ENCODE measurements at regions of chr3 and their contacts with region 1.

Region 1: DNA sequence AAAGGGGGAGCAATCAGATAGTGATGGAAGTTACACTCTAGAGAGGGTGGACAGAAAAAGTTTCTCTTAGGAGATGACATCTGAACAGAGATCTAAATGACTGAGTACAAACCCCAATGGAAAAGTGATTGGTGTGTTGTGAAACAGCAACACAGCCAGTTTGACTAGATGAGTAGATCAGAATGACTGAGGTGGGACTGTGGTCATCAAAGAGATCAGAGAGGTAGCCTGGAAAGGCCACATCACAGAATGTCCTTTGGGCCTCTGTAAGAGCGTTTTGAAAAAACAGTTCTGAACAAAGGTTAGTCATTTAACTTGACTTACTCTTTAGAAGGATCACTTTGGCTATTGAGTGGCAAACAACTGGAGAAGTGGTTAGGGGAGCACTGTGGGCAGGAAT is 10.6 kb downstream of the LRRC58 start:
- DNase-seq: no peak
- H3K4me3 Mint-ChIP-seq: peak overlapping the region; percentile 11
- H3K27ac Mint-ChIP-seq: peak overlapping the region; percentile 34
- H3K4me1 Mint-ChIP-seq: peaks cover 22% of the 10 kb centered on the region
- H3K27me3 Mint-ChIP-seq: no peaks in the 10 kb centered on the region

Region 2: DNA sequence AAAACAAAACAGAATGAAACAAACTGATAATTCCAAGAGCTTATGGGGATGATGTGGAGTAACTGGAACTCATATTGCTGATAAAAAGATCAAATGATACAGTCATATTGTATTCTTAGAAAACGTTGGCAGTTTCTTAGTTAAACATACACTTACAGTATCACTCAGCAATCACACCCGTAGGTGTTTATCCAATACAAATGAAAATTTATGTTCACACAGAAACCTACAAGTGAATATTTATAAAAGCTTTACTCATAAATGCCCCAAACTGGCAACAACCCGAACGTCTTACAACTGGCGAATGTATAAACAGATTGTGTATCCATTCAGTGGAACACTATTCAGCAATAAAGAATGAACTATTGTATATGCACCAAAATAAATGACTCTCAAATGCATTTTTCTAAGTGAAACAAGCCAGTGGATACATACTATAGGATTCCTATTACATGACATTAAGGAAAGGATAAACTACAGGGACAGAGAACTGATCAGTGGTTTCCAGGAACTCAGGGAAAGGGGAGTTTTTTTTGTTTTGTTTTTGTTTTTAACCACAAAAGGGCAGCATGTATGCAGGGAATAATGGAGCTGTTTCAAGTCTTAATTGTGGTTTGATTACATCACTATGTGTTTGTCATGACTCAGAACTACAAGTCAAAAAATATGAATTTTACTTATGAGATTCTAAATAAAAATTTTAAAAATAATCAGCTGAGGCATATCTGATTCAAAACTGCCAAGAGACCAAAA is 185.8 kb after region 1 on chr3:
- intact Hi-C with region 1: loop called (anchors 5 kb)
- DNase-seq: no peak
- H3K4me3 Mint-ChIP-seq: no peak overlapping the region
- H3K27ac Mint-ChIP-seq: peak overlapping the region; percentile 30
- H3K4me1 Mint-ChIP-seq: peaks cover 23% of the 10 kb centered on the region
- H3K27me3 Mint-ChIP-seq: peaks cover 3% of the 10 kb centered on the region